Natural killer cell (primary cell): ENCODE measurements at regions of chr1 and their contacts with region 1.

Region 1: GRCh38 chr1:99180343-99180808 is 83.9 kb upstream of the PLPPR4 start:
- DNase-seq: peak in 1 of 2 donors; percentile 76
- ATAC-seq: peak; percentile 66 to 80 (median 79)
- H3K4me3 ChIP-seq: no peak overlapping the region
- H3K4me3 Mint-ChIP-seq: no peak overlapping the region
- H3K27ac ChIP-seq: no peak overlapping the region
- H3K27ac Mint-ChIP-seq: no peak overlapping the region
- H3K4me1 ChIP-seq: no peaks in the 10 kb centered on the region
- H3K4me1 Mint-ChIP-seq: no peaks in the 10 kb centered on the region
- H3K27me3 ChIP-seq: no peaks in the 10 kb centered on the region
- H3K27me3 Mint-ChIP-seq: peaks cover 3 to 5% of the 10 kb centered on the region in 2 donors
- CTCF ChIP-seq: peak; percentile 74

Region 2: GRCh38 chr1:99365141-99365540 is 184.8 kb after region 1 on chr1:
- intact Hi-C with region 1: no loop called
- DNase-seq: no peak
- ATAC-seq: no peak
- H3K4me3 ChIP-seq: no peak overlapping the region
- H3K4me3 Mint-ChIP-seq: no peak overlapping the region
- H3K27ac ChIP-seq: no peak overlapping the region
- H3K27ac Mint-ChIP-seq: no peak overlapping the region
- H3K4me1 ChIP-seq: no peaks in the 10 kb centered on the region
- H3K4me1 Mint-ChIP-seq: no peaks in the 10 kb centered on the region
- H3K27me3 ChIP-seq: no peaks in the 10 kb centered on the region
- H3K27me3 Mint-ChIP-seq: no peaks in the 10 kb centered on the region
- CTCF ChIP-seq: no peak

Region 3: DNA sequence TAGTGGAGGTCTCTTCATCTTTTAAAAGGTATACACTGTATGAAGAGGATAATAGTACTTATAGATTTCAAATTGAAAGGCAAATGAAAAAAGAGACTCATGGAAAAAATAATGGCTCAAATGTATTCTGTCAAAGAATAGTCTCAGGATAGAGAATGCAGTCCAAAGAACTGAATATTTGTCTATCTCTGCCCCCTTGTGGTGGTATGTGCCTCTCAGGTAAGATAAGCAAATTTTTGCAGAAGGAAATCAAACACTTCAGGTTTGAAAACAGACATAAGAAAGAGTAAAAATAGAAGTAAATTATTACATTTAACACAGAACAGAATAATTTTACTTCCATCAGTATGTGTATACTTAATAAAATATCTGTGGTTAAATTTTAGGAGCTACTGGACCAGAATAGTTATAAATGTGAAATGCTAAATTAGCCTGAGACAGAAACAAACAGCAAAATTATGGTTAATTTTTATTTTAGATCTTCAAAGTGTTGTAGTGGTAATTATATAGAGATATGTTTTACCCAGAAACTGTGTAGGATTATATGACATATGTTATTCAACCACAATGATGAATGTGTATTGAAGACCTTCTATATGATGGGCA is 301.1 kb after region 1 on chr1:
- intact Hi-C with region 1: loop called (anchors 5 kb)
- DNase-seq: peak in 1 of 2 donors; percentile 68
- ATAC-seq: no peak
- H3K4me3 ChIP-seq: no peak overlapping the region
- H3K4me3 Mint-ChIP-seq: no peak overlapping the region
- H3K27ac ChIP-seq: no peak overlapping the region
- H3K27ac Mint-ChIP-seq: no peak overlapping the region
- H3K4me1 ChIP-seq: no peaks in the 10 kb centered on the region
- H3K4me1 Mint-ChIP-seq: no peaks in the 10 kb centered on the region
- H3K27me3 ChIP-seq: no peaks in the 10 kb centered on the region
- H3K27me3 Mint-ChIP-seq: peaks cover 0 to 5% of the 10 kb centered on the region in 2 donors
- CTCF ChIP-seq: peak; percentile 49

Region 4: GRCh38 chr1:99707535-99708142 is 527.3 kb after region 1 on chr1:
- intact Hi-C with region 1: loop called (anchors 10 kb)
- DNase-seq: peak; percentile 24 to 67
- ATAC-seq: peak; percentile 49 to 66 (median 63)
- H3K4me3 ChIP-seq: no peak overlapping the region
- H3K4me3 Mint-ChIP-seq: no peak overlapping the region
- H3K27ac ChIP-seq: no peak overlapping the region
- H3K27ac Mint-ChIP-seq: no peak overlapping the region
- H3K4me1 ChIP-seq: peaks cover 6% of the 10 kb centered on the region
- H3K4me1 Mint-ChIP-seq: peaks cover 7 to 11% of the 10 kb centered on the region in 2 donors
- H3K27me3 ChIP-seq: no peaks in the 10 kb centered on the region
- H3K27me3 Mint-ChIP-seq: no peaks in the 10 kb centered on the region
- CTCF ChIP-seq: peak; percentile 76